ENCODE measurements at regions of chr2 and their contacts with region 1.

Region 1: DNA sequence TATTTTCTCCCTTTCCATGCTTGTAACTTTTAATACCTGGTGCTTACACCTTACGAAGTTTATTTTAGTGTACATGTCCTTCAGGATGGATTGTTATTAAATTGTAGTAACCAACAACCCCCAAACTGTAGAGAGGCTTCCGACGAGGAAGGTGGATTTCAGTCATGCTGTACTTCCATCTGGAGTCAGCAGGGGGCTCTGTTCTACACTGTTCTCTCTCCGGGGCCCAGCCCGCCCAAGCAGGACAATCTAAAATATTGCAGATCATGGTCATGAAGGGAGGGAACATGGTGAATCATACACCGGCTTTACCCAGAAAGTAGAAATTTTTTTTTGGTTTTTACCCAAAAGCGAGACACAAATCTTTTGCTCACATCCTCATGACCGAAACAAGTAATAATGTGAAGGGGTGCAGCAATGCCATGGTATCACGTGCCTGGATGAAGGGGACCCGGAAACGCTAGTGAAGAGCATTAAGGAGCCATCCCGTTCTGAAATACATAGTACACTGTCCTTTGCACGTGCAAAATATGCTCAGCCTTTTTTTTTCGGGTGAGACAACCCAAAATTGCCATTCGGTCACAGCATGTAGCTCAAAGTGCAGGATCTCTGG is 884.8 kb downstream of the EPHA4 start:
- DNase-seq: peak; percentile 54
- H3K4me3 ChIP-seq: no peak overlapping the region
- H3K27ac ChIP-seq: no peak overlapping the region
- H3K4me1 ChIP-seq: peaks cover 3% of the 10 kb centered on the region
- H3K27me3 ChIP-seq: no peaks in the 10 kb centered on the region
- CTCF ChIP-seq: peak; percentile 81 to 90

Region 2: GRCh38 chr2:219997341-219997851 is 689.9 kb before region 1 on chr2:
- CTCF ChIA-PET with region 1: interaction called, 5 read pairs
- dilution Hi-C with region 1: no loop called
- in situ Hi-C with region 1: no loop called
- intact Hi-C with region 1: loop called (anchors 5 kb)
- DNase-seq: peak; percentile 11
- H3K4me3 ChIP-seq: no peak overlapping the region
- H3K27ac ChIP-seq: no peak overlapping the region
- H3K4me1 ChIP-seq: no peaks in the 10 kb centered on the region
- H3K27me3 ChIP-seq: no peaks in the 10 kb centered on the region
- CTCF ChIP-seq: peak; percentile 46 to 65

Region 3: GRCh38 chr2:220296174-220296573 is 391.2 kb before region 1 on chr2:
- CTCF ChIA-PET with region 1: no interaction called
- dilution Hi-C with region 1: no loop called
- in situ Hi-C with region 1: no loop called
- intact Hi-C with region 1: loop called (anchors 10 kb)
- DNase-seq: no peak
- H3K4me3 ChIP-seq: no peak overlapping the region
- H3K27ac ChIP-seq: no peak overlapping the region
- H3K4me1 ChIP-seq: peaks cover 6% of the 10 kb centered on the region
- H3K27me3 ChIP-seq: no peaks in the 10 kb centered on the region
- CTCF ChIP-seq: no peak

Region 4: DNA sequence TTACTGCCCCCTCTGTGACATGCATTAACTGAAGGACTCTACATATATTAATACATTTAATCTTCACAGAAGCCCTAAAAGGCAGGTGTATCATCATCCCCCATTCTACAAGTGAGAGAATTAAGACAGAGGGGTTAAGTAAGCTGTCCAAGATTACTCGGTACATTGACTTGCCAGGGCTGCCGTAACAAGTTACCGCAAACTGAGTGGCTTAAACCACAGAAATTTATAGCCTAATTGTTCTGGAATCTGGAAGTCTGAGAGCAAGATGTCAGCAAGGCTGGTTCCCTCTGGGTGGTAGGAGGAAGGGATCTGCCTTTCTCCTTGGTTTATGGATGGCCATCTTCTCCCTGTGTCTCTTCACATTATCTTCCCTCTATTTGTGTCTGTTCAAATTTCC is 279.3 kb after region 1 on chr2:
- CTCF ChIA-PET with region 1: no interaction called
- dilution Hi-C with region 1: no loop called
- in situ Hi-C with region 1: no loop called
- intact Hi-C with region 1: no loop called
- DNase-seq: peak; percentile 87
- H3K4me3 ChIP-seq: no peak overlapping the region
- H3K27ac ChIP-seq: no peak overlapping the region
- H3K4me1 ChIP-seq: peaks cover 10% of the 10 kb centered on the region
- H3K27me3 ChIP-seq: no peaks in the 10 kb centered on the region
- CTCF ChIP-seq: no peak

Region 5: DNA sequence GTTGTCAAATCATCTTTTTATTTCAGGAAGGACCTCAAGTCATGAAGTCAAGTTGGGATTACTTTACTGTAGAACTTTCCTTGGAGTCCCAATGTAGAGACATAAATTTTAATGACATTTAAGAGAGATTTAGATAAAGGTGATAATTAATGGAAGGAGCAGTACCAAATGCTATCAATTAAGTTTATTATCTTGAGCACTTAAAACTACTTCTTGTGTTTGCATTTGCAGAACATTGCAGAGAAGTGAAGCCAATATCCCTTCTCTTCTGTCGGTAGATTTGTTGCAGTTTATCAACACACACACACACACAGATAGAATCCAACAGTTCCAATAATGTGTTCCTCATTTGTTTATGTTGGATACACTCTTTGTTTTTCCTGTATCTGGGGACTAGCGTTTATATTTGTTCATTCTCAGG is 314.1 kb after region 1 on chr2:
- CTCF ChIA-PET with region 1: no interaction called
- dilution Hi-C with region 1: no loop called
- in situ Hi-C with region 1: loop called in 1 of 2 experiments (anchors 25 kb)
- intact Hi-C with region 1: no loop called
- DNase-seq: no peak
- H3K4me3 ChIP-seq: no peak overlapping the region
- H3K27ac ChIP-seq: no peak overlapping the region
- H3K4me1 ChIP-seq: no peaks in the 10 kb centered on the region
- H3K27me3 ChIP-seq: no peaks in the 10 kb centered on the region
- CTCF ChIP-seq: no peak

Region 6: GRCh38 chr2:221102896-221103688 is 415.8 kb after region 1 on chr2:
- CTCF ChIA-PET with region 1: no interaction called
- dilution Hi-C with region 1: no loop called
- in situ Hi-C with region 1: no loop called
- intact Hi-C with region 1: loop called (anchors 2 kb)
- DNase-seq: no peak
- H3K4me3 ChIP-seq: no peak overlapping the region
- H3K27ac ChIP-seq: no peak overlapping the region
- H3K4me1 ChIP-seq: peaks cover 20% of the 10 kb centered on the region
- H3K27me3 ChIP-seq: no peaks in the 10 kb centered on the region
- CTCF ChIP-seq: no peak

Region 7: GRCh38 chr2:221969087-221969829 is 1281.9 kb after region 1 on chr2:
- CTCF ChIA-PET with region 1: no interaction called
- dilution Hi-C with region 1: no loop called
- in situ Hi-C with region 1: loop called (anchors 25 kb)
- intact Hi-C with region 1: loop called (anchors 2 kb)
- DNase-seq: peak; percentile 23
- H3K4me3 ChIP-seq: no peak overlapping the region
- H3K27ac ChIP-seq: no peak overlapping the region
- H3K4me1 ChIP-seq: no peaks in the 10 kb centered on the region
- H3K27me3 ChIP-seq: no peaks in the 10 kb centered on the region
- CTCF ChIP-seq: peak; percentile 73 to 75

Measured in mammary epithelial cell (primary cell).